ENCODE measurements at regions of chr2 and their contacts with region 1.

Region 1: GRCh38 chr2:24421668-24422067 is 61.3 kb upstream of the ITSN2 start:
- DNase-seq: peak in 4 of 5 donors; percentile 29 to 34 (median 32)
- H3K4me3 ChIP-seq: no peak overlapping the region
- H3K4me3 Mint-ChIP-seq: no peak overlapping the region
- H3K27ac ChIP-seq: no peak overlapping the region
- H3K27ac Mint-ChIP-seq: peak overlapping the region in 1 of 7 donors; percentile 78
- H3K4me1 ChIP-seq: no peaks in the 10 kb centered on the region
- H3K4me1 Mint-ChIP-seq: peaks cover 0 to 3% (median 0%) of the 10 kb centered on the region in 4 donors
- H3K27me3 ChIP-seq: no peaks in the 10 kb centered on the region
- H3K27me3 Mint-ChIP-seq: no peaks in the 10 kb centered on the region

Region 2: DNA sequence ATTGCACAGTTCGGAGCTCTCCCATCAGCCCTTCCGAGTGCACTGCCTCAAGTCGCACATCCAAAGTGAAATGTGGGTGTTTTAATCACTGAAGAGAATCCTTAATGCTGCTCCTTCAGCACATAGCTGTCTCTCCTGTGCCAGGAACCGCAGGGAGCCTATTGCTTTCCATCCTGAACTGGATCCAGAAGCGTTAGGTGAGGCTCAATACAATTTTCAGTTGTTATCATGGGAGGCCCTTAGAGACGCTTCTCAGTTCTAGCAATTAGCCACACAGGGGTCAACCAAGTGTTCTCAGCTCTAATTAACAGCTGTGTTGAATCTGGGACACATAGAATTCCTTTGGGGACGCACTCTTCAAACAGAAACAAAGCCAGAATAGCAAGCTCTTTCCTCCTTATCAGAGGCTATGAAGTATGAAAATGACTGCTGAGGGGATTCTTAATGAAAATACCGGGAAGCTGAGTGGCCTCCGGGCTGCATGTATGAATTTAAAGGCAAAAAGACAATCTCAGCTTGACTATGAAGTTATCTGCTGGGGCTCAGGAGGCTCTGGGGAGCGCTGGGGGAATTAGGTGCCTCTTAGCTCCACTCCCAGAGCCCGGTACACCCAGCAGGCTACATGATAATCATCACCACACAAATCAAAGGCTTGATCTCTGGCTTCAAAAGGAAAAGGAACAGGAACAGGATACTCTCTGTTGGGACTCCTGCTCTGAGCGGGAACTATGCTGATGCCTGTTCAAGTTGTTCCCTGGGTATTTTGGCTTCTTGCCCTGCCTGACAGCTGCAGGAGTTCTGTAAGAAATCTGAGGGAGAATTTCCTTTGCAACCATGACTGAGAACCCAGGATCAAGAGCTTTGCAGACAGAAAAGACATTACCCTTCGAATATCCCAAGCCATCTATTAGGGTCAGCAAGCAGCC is 14.0 kb after region 1 on chr2:
- CTCF ChIA-PET with region 1: interaction called, 14 read pairs
- POLR2A ChIA-PET with region 1: no interaction called
- intact Hi-C with region 1: no loop called
- DNase-seq: no peak
- H3K4me3 ChIP-seq: no peak overlapping the region
- H3K4me3 Mint-ChIP-seq: no peak overlapping the region
- H3K27ac ChIP-seq: no peak overlapping the region
- H3K27ac Mint-ChIP-seq: no peak overlapping the region
- H3K4me1 ChIP-seq: no peaks in the 10 kb centered on the region
- H3K4me1 Mint-ChIP-seq: no peaks in the 10 kb centered on the region
- H3K27me3 ChIP-seq: no peaks in the 10 kb centered on the region
- H3K27me3 Mint-ChIP-seq: no peaks in the 10 kb centered on the region

Region 3: DNA sequence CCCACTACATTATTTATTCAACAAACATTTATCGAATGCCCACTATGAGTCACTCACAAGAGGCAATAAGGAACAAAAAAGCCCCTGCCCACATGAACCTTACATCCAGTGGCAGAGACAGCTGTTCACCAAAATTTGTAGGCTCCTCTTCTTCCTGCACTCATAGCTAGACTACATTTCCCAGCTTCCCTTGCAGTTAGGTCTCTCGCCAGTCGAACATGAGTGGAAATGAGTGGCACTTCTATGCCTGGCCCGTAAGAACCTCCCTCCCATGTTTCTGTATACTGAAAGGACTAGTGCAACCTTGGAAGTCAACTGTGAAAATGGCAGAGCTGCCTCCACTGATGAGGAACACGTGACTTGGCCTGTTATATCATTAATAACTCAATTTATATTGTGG is 50.0 kb after region 1 on chr2:
- CTCF ChIA-PET with region 1: no interaction called
- POLR2A ChIA-PET with region 1: no interaction called
- intact Hi-C with region 1: no loop called
- DNase-seq: peak in 4 of 5 donors; percentile 4 to 28 (median 16)
- H3K4me3 ChIP-seq: no peak overlapping the region
- H3K4me3 Mint-ChIP-seq: no peak overlapping the region
- H3K27ac ChIP-seq: no peak overlapping the region
- H3K27ac Mint-ChIP-seq: no peak overlapping the region
- H3K4me1 ChIP-seq: no peaks in the 10 kb centered on the region
- H3K4me1 Mint-ChIP-seq: no peaks in the 10 kb centered on the region
- H3K27me3 ChIP-seq: no peaks in the 10 kb centered on the region
- H3K27me3 Mint-ChIP-seq: peaks cover 3 to 4% of the 10 kb centered on the region in 2 donors

Region 4: DNA sequence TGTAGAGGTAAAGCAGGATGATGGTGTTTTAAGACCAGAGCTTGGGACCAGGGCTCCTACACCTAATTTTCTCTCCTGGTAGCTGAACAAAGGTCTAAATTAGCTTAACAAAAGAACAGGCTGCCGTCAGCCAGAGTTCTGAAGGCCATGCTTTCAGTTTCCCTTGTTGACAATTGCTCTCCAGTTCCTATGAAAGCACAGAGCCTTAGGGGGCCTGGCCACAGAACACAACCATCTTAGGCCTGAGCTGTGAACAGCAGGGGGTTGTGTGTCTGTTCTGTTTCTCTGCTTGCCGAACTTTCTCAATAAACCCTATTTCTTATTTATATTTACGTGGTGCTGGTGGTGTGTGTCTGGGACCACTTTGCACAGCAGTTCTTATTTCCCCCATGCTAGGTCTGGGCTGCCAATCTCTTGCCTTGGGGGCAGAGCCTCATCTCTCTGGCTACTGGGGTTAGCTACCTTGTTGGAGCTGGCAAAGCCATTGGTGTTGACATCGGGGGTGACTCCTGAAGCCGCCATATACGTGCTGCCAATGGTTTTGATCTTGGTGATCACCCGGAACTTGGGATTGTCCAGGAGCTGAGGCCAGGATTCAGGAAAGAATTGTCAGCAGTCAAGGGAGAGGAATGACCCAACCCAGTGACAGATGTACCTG is 400.5 kb after region 1 on chr2:
- CTCF ChIA-PET with region 1: interaction called, 71 read pairs
- POLR2A ChIA-PET with region 1: interaction called, 6 read pairs
- intact Hi-C with region 1: loop called (anchors 1 kb)
- DNase-seq: no peak
- H3K4me3 ChIP-seq: no peak overlapping the region
- H3K4me3 Mint-ChIP-seq: no peak overlapping the region
- H3K27ac ChIP-seq: no peak overlapping the region
- H3K27ac Mint-ChIP-seq: peak overlapping the region in 2 of 7 donors; percentile 12 to 38
- H3K4me1 ChIP-seq: peaks cover 16% of the 10 kb centered on the region
- H3K4me1 Mint-ChIP-seq: peaks cover 5 to 16% (median 13%) of the 10 kb centered on the region in 4 donors
- H3K27me3 ChIP-seq: no peaks in the 10 kb centered on the region
- H3K27me3 Mint-ChIP-seq: no peaks in the 10 kb centered on the region

Region 5: GRCh38 chr2:25131567-25132298 is 710.1 kb after region 1 on chr2:
- CTCF ChIA-PET with region 1: interaction called, 11 read pairs
- POLR2A ChIA-PET with region 1: no interaction called
- intact Hi-C with region 1: no loop called
- DNase-seq: no peak
- H3K4me3 ChIP-seq: no peak overlapping the region
- H3K4me3 Mint-ChIP-seq: peak overlapping the region; percentile 12 to 81 (median 66)
- H3K27ac ChIP-seq: no peak overlapping the region
- H3K27ac Mint-ChIP-seq: peak overlapping the region in 1 of 7 donors; percentile 38
- H3K4me1 ChIP-seq: no peaks in the 10 kb centered on the region
- H3K4me1 Mint-ChIP-seq: peaks cover 3 to 16% (median 9%) of the 10 kb centered on the region in 4 donors
- H3K27me3 ChIP-seq: peaks cover 37% of the 10 kb centered on the region
- H3K27me3 Mint-ChIP-seq: peaks cover 29 to 44% of the 10 kb centered on the region in 2 donors